ENCODE measurements at regions of chr7 and their contacts with region 1.

Region 1: DNA sequence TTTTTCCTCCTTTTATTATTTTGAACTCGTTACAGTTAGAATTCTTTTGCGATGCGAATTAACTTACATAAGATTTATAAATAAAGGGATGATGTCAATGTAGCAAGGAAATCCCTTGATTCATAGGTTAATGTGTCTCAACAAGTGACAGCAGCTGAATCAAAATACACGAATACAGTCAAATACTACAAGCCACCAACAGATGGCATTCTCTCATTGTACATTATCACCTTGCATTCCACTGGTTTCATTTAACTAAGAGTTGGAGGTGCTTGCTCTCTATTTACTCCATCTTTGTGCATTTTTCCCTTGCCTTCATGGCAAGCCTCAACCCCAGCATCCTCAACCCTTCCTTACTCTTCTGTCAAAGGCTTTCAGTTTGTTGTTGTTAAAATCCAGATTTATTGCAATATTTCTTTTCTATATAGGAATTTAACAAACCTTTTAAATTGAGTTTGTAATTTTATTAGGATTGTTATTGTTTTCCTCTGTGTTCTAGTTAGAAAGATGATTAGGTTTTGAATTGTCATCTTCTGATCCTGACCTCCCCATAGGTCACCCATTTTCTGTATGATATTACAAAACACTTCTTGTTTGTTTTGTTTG is 78.3 kb downstream of the SLC25A40 start:
- DNase-seq: peak in 4 of 5 donors; percentile 34 to 43 (median 37)
- H3K4me3 ChIP-seq: no peak overlapping the region
- H3K4me3 Mint-ChIP-seq: no peak overlapping the region
- H3K27ac ChIP-seq: no peak overlapping the region
- H3K27ac Mint-ChIP-seq: no peak overlapping the region
- H3K4me1 ChIP-seq: no peaks in the 10 kb centered on the region
- H3K4me1 Mint-ChIP-seq: no peaks in the 10 kb centered on the region
- H3K27me3 ChIP-seq: no peaks in the 10 kb centered on the region
- H3K27me3 Mint-ChIP-seq: peaks cover 5 to 8% of the 10 kb centered on the region in 2 donors

Region 2: GRCh38 chr7:88111136-88111743 is 313.3 kb after region 1 on chr7:
- CTCF ChIA-PET with region 1: interaction called, 4 read pairs
- POLR2A ChIA-PET with region 1: no interaction called
- intact Hi-C with region 1: loop called (anchors 1 kb)
- DNase-seq: peak in 4 of 5 donors; percentile 16 to 26 (median 24)
- H3K4me3 ChIP-seq: no peak overlapping the region
- H3K4me3 Mint-ChIP-seq: no peak overlapping the region
- H3K27ac ChIP-seq: no peak overlapping the region
- H3K27ac Mint-ChIP-seq: no peak overlapping the region
- H3K4me1 ChIP-seq: no peaks in the 10 kb centered on the region
- H3K4me1 Mint-ChIP-seq: peaks cover 0 to 1% (median 0%) of the 10 kb centered on the region in 4 donors
- H3K27me3 ChIP-seq: no peaks in the 10 kb centered on the region
- H3K27me3 Mint-ChIP-seq: no peaks in the 10 kb centered on the region

Region 3: DNA sequence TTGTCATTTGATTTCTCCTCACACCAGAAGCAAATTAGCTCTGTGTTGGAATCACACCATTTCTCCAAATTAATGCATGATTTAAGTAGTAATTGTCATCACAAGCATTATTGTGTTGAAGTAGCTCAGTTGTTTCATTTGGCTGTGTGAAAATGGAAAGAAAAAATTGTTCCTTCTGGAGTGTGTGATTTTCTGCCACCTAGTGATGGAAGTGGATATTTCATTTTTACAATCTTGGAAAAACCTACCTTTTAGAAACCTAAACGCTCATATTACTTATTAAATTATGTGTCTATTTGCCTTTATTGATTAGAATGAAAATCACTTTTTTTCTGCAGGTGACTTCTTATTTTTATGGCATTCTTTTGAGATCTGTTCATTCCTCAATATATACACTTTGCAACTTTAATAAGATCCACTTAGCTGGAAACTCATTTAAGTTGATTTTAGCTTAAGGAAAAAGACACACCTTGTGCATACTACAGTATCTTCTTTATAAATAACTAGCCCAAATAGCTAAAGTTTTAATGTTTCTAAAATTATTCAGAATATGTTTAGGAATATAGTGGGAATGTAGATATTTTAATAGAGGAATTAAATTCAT is 371.9 kb after region 1 on chr7:
- CTCF ChIA-PET with region 1: no interaction called
- POLR2A ChIA-PET with region 1: no interaction called
- intact Hi-C with region 1: loop called (anchors 1 kb)
- DNase-seq: peak in 2 of 5 donors; percentile 2 to 12
- H3K4me3 ChIP-seq: no peak overlapping the region
- H3K4me3 Mint-ChIP-seq: no peak overlapping the region
- H3K27ac ChIP-seq: no peak overlapping the region
- H3K27ac Mint-ChIP-seq: no peak overlapping the region
- H3K4me1 ChIP-seq: no peaks in the 10 kb centered on the region
- H3K4me1 Mint-ChIP-seq: peaks cover 0 to 1% (median 0%) of the 10 kb centered on the region in 4 donors
- H3K27me3 ChIP-seq: no peaks in the 10 kb centered on the region
- H3K27me3 Mint-ChIP-seq: no peaks in the 10 kb centered on the region